Panc1 (cell line): ENCODE measurements at regions of chr1 and their contacts with region 1.

Region 1: GRCh38 chr1:17102232-17102631 is 17.0 kb downstream of the PADI2 start:
- DNase-seq: no peak
- ATAC-seq: no peak
- H3K4me3 ChIP-seq: no peak overlapping the region
- H3K27ac ChIP-seq: no peak overlapping the region
- H3K4me1 ChIP-seq: peaks cover 20% of the 10 kb centered on the region
- H3K27me3 ChIP-seq: no peaks in the 10 kb centered on the region
- CTCF ChIP-seq: no peak

Region 2: DNA sequence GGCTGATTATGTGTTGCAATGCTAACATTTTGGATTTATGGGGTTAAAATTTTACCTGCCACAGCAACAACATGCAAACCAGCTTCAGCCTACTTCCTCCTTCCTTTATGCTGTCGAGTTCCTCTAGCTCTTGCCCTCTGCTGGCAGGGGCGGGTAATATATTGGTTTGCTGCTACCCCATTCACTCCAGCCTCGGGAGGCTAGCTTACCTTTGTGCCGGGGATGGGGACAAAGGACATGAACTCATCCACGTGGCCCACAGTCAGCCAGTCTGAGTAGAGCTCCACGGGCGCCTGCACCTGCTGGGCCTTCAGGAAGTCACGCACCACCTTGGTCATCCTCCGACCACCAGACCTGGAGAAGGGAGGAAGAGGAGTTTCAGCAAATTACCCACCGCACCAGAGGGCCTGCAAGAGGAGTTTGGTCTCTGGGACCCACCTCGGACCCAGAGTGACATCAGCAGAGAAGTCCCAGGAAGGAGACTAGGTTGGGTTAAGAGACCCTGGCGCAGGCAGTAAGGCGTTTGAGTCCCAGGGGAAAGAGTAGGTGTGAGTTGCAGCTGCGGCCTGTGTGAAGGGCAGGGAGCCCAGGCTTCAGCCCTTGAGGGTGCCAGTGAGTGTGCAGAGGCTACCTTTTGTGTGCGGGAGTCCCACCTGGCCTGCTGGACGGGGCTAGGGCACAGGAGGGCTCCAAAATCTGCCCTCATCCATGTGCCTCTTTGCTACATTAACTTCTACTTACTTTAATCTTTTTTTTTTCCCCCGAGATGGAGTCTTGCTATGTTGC is 26.6 kb before region 1 on chr1:
- CTCF ChIA-PET with region 1: no interaction called
- POLR2A ChIA-PET with region 1: no interaction called
- in situ Hi-C with region 1: no loop called
- intact Hi-C with region 1: loop called (anchors 2 kb)
- DNase-seq: no peak
- ATAC-seq: peak; percentile 89
- H3K4me3 ChIP-seq: no peak overlapping the region
- H3K27ac ChIP-seq: no peak overlapping the region
- H3K4me1 ChIP-seq: 0 out of 2 replicates have a peak, but pooled peaks cover 2% of the 10 kb centered on the region
- H3K27me3 ChIP-seq: no peaks in the 10 kb centered on the region
- CTCF ChIP-seq: peak; percentile 87

Region 3: DNA sequence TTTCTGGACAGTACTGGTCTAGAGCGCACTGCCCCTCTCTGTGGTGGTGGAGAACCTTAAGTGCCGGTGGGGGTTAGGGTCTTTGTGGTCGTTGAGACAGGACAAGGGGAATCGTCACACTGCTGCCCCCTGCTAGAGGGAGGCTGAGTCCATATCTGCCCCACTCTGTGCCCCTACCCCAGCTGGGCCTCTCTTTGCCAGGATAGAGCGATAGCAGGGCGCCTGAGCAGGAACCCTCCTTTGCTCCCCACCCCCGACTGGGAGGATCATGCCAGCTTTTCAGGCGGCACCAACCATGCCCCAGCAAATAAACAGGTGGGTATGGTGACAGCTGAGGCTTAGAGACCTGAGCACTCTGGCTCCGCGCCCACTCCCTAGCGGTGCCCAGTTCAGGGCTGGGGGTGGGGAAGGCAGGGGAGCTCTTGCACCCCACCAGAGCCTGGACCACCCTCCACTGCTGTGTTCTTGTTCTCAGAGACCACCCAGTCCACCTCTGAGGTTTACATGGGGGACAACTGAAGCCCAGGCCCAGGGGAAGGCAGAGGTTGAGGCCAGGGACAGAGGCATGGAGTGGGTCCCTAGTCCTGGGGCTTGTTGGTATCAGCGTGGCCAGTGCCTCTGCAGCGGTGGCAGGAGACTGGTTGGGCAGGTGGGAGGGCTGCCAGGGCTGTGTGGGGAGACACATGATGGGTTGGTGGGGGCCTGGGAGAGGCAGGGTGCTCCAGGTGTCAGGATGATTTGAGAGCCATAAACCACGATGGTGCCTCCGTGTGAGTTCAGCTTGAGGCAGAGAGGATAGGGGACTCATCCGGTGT is 15.4 kb after region 1 on chr1:
- CTCF ChIA-PET with region 1: no interaction called
- POLR2A ChIA-PET with region 1: no interaction called
- in situ Hi-C with region 1: no loop called
- intact Hi-C with region 1: no loop called
- DNase-seq: no peak
- ATAC-seq: no peak
- H3K4me3 ChIP-seq: peak overlapping the region; percentile 62 to 82
- H3K27ac ChIP-seq: peak overlapping the region; percentile 71
- H3K4me1 ChIP-seq: peaks cover 74% of the 10 kb centered on the region
- H3K27me3 ChIP-seq: no peaks in the 10 kb centered on the region
- CTCF ChIP-seq: no peak

Region 4: GRCh38 chr1:17141441-17142197 is 39.4 kb after region 1 on chr1:
- CTCF ChIA-PET with region 1: no interaction called
- POLR2A ChIA-PET with region 1: no interaction called
- in situ Hi-C with region 1: no loop called
- intact Hi-C with region 1: no loop called
- DNase-seq: no peak
- ATAC-seq: no peak
- H3K4me3 ChIP-seq: no peak overlapping the region
- H3K27ac ChIP-seq: peak overlapping the region; percentile 60
- H3K4me1 ChIP-seq: peaks cover 6% of the 10 kb centered on the region; the same call in 1 of the 2 replicates
- H3K27me3 ChIP-seq: no peaks in the 10 kb centered on the region
- CTCF ChIP-seq: no peak